ENCODE measurements at regions of chr15 and their contacts with region 1.

Region 1: GRCh38 chr15:81274931-81275707 is 48.8 kb downstream of the STARD5 start:
- DNase-seq: peak; percentile 81
- H3K4me3 Mint-ChIP-seq: no peak overlapping the region
- H3K27ac Mint-ChIP-seq: no peak overlapping the region
- H3K4me1 Mint-ChIP-seq: no peaks in the 10 kb centered on the region
- H3K27me3 Mint-ChIP-seq: peaks cover 96% of the 10 kb centered on the region
- CTCF ChIP-seq: peak; percentile 70

Region 2: DNA sequence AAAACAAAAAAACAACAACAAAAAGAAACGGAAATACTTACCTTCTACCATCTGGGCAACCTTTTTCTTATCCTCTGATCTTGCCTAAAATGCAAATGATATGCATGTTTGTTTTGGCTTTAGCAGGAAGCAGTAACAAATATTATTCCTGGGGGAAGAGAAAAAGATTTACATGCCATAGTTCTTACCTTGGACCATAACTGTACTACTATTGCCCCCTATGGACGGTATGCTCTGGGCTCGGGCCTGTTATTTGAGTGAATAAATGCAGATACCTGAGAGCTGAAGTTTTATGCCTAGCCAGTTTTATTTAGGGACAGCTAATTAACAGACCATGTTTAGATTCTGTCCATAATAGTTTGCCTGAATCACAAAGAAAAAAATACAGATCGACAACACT is 61.4 kb after region 1 on chr15:
- CTCF ChIA-PET with region 1: interaction called, 3 read pairs
- intact Hi-C with region 1: loop called (anchors 1 kb)
- DNase-seq: peak; percentile 30
- H3K4me3 Mint-ChIP-seq: no peak overlapping the region
- H3K27ac Mint-ChIP-seq: no peak overlapping the region
- H3K4me1 Mint-ChIP-seq: no peaks in the 10 kb centered on the region
- H3K27me3 Mint-ChIP-seq: peaks cover 58% of the 10 kb centered on the region
- CTCF ChIP-seq: peak; percentile 43

Region 3: DNA sequence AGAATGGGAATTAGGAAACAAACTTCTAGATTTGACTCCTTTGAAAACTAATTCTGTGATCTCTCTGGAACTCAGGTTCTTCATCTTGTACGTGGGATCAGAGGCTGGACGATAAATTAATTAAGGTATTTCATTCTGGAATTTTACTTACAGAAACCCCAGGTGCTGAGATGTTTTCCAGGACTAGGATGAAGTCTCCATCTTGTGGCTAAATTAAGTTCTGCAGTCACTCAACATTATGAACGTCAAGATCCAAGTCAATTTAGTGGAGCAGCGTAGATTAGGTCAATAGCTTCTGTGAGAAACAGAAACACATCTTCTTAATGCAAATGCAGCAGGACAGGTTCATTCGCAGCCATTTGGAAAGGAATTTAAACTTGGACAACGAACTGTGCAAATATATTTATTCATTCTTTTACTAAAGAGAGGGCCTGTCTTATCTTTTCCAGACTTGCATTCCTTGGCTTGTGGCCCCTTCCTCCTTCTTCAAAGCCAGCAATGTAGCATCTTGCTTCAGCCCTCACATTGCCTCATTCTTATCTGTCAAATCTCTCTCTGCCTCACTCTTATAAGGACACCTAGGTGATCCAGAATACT is 125.6 kb after region 1 on chr15:
- CTCF ChIA-PET with region 1: interaction called, 17 read pairs
- intact Hi-C with region 1: loop called (anchors 1 kb)
- DNase-seq: peak; percentile 33
- H3K4me3 Mint-ChIP-seq: no peak overlapping the region
- H3K27ac Mint-ChIP-seq: no peak overlapping the region
- H3K4me1 Mint-ChIP-seq: no peaks in the 10 kb centered on the region
- H3K27me3 Mint-ChIP-seq: peaks cover 56% of the 10 kb centered on the region
- CTCF ChIP-seq: peak; percentile 39